OCI-LY7 (cell line): ENCODE measurements at regions of chr3 and their contacts with region 1.

Region 1: DNA sequence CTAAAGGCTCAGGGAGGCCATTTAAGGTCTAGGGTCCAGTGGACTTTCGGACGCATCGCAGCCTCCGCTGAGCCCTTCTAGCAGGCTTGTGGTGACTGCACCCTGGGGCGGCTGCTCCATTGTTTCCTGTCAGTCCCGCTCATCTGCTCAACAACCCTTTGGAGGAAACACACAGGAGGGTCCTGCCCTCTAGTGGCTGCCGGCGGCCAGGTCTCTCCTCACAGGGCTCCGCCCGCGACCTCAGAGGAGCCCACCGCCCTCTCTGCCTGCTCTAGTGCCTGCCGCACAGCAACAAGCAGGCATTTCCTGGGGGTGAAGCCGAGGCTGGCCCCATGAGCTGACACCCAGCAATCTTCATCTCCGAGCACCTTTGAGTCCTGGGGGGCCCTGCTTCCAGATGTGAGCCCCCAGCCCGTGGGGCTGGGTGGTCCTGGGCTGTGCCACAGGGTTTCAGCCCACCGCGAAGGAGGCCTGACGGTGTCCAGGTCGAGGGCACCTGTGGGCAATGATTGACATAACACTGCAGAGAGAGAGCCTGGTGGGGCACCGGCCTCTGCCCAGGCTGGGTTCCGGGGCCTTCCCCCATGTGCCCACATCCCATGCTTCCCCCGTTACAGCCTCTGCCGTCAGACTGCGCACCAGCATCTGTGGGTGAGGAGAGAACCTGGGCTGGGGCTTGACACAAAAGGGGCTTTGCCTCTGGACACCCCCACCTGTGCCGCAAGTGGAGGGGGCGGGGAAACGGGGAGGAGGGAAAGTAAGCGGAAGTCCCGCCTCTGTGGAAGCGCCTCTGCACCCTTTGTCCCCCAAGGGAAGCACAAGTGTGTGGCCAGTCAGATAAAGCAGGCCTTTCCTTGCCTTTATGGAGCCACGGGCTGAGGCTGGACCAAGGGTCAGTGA is 27.0 kb upstream of the SFMBT1 start:
- DNase-seq: peak; percentile 89
- H3K4me3 ChIP-seq: peak overlapping the region; percentile 69
- H3K27ac ChIP-seq: peak overlapping the region; percentile 21
- H3K4me1 ChIP-seq: peaks cover 14% of the 10 kb centered on the region
- CTCF ChIP-seq: peak; percentile 97

Region 2: GRCh38 chr3:52742418-52743041 is 330.4 kb before region 1 on chr3:
- CTCF ChIA-PET with region 1: no interaction called
- POLR2A ChIA-PET with region 1: no interaction called
- intact Hi-C with region 1: loop called (anchors 5 kb)
- DNase-seq: peak; percentile 48
- H3K4me3 ChIP-seq: no peak overlapping the region
- H3K27ac ChIP-seq: no peak overlapping the region
- H3K4me1 ChIP-seq: no peaks in the 10 kb centered on the region
- CTCF ChIP-seq: peak; percentile 85

Region 3: DNA sequence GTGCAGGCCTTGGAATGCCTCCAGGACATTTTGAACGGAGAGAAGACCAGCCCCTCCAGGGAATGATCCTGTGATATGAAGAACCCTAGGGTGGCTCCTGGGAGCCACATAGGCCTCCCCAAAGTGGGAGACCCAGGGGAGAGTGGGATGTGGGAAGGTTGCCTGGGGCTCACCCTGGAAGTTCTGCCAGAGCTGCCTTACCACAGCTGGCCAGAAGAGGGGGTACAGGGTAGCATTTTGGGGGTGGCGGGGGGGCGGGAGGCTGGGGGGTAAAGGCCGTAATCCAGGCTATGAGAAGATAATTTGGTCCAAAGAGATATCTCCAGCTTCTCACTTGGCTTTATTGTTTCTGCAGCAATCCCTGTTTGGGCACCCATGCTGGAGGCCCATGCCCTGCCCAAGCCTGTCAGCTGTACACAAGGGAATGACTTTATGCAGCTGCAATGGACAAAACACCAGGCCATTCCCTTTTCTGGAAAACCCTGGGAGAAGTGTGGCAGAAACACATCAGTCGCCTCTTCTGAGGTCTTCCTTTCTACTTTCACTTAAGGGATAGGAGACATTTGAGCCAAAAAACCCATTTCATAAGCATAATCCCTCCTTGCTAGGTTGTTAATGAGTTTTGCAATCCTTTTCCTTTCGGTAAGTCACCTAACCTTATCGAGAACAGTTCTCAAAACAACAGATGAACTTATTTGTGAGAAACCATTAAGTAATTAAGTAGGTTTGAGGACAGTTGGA is 227.0 kb before region 1 on chr3:
- CTCF ChIA-PET with region 1: no interaction called
- POLR2A ChIA-PET with region 1: no interaction called
- intact Hi-C with region 1: loop called (anchors 1 kb)
- DNase-seq: peak; percentile 22
- H3K4me3 ChIP-seq: no peak overlapping the region
- H3K27ac ChIP-seq: no peak overlapping the region
- H3K4me1 ChIP-seq: no peaks in the 10 kb centered on the region
- CTCF ChIP-seq: peak; percentile 74

Region 4: GRCh38 chr3:52851348-52851747 is 221.6 kb before region 1 on chr3:
- CTCF ChIA-PET with region 1: interaction called, 3 read pairs
- POLR2A ChIA-PET with region 1: no interaction called
- intact Hi-C with region 1: loop called (anchors 1 kb)
- DNase-seq: peak; percentile 60
- H3K4me3 ChIP-seq: no peak overlapping the region
- H3K27ac ChIP-seq: no peak overlapping the region
- H3K4me1 ChIP-seq: no peaks in the 10 kb centered on the region
- CTCF ChIP-seq: peak; percentile 81

Region 5: GRCh38 chr3:52907497-52907896 is 165.4 kb before region 1 on chr3:
- CTCF ChIA-PET with region 1: no interaction called
- POLR2A ChIA-PET with region 1: no interaction called
- intact Hi-C with region 1: loop called (anchors 2 kb)
- DNase-seq: no peak
- H3K4me3 ChIP-seq: no peak overlapping the region
- H3K27ac ChIP-seq: no peak overlapping the region
- H3K4me1 ChIP-seq: no peaks in the 10 kb centered on the region
- CTCF ChIP-seq: peak; percentile 61

Region 6: DNA sequence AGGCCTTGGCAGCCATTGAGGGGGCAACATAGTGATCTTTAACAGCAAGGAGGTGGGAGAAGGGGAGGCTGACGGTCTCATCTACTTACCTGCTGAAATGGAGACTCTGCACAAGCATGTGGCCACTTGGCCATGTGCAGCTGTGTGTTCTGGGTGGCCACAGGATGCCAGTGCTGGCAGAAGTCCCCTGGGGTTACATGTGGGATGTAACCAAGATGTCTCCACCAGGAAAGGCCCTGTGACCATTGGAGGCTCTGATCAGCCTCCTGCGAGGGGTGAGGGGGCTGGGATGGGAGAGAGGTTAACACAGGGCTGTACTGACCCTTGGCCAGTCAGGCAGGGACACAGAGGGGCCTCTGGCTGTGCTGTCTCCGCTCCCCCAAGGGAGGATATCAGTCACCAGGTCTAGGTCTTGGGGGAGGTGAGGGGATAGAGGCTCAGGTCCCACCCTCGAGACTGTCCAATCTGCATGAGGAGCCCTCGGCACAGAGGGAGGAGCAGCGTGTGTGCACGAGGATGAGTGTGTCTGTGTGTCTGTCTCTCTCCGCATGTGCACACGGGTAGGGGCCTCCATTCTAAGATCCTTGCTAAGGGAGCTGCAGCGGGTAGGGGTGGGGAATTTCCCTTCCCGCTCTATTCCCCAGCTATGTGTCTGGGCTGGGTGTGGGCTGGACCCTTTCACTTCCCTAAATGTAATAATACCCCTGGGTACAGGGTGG is 107.6 kb after region 1 on chr3:
- CTCF ChIA-PET with region 1: no interaction called
- POLR2A ChIA-PET with region 1: no interaction called
- intact Hi-C with region 1: no loop called
- DNase-seq: peak; percentile 86
- H3K4me3 ChIP-seq: peak overlapping the region; percentile 44
- H3K27ac ChIP-seq: peak overlapping the region; percentile 87
- H3K4me1 ChIP-seq: peaks cover 63% of the 10 kb centered on the region
- CTCF ChIP-seq: no peak